ENCODE measurements at regions of chr2 and their contacts with region 1.

Region 1: GRCh38 chr2:9142551-9143263 is 63.9 kb upstream of the ASAP2 start:
- DNase-seq: peak; percentile 79 to 84 (median 83)
- ATAC-seq: peak; percentile 95 to 97 (median 96)
- H3K4me3 ChIP-seq: peak overlapping the region in 2 of 3 donors; percentile 19 to 28
- H3K27ac ChIP-seq: no peak overlapping the region
- H3K4me1 ChIP-seq: peaks cover 0 to 13% (median 0%) of the 10 kb centered on the region in 4 donors
- H3K27me3 ChIP-seq: no peaks in the 10 kb centered on the region
- CTCF ChIP-seq: peak; percentile 98 to 99 (median 98)
- POLR2A ChIP-seq: no peak

Region 2: GRCh38 chr2:9095690-9096351 is 46.9 kb before region 1 on chr2:
- intact Hi-C with region 1: no loop called
- DNase-seq: peak in 2 of 3 donors; percentile 47 to 60
- ATAC-seq: peak; percentile 66 to 76 (median 72)
- H3K4me3 ChIP-seq: no peak overlapping the region
- H3K27ac ChIP-seq: no peak overlapping the region
- H3K4me1 ChIP-seq: no peaks in the 10 kb centered on the region
- H3K27me3 ChIP-seq: no peaks in the 10 kb centered on the region
- CTCF ChIP-seq: peak in 1 of 4 donors; percentile 9
- POLR2A ChIP-seq: no peak

Region 3: DNA sequence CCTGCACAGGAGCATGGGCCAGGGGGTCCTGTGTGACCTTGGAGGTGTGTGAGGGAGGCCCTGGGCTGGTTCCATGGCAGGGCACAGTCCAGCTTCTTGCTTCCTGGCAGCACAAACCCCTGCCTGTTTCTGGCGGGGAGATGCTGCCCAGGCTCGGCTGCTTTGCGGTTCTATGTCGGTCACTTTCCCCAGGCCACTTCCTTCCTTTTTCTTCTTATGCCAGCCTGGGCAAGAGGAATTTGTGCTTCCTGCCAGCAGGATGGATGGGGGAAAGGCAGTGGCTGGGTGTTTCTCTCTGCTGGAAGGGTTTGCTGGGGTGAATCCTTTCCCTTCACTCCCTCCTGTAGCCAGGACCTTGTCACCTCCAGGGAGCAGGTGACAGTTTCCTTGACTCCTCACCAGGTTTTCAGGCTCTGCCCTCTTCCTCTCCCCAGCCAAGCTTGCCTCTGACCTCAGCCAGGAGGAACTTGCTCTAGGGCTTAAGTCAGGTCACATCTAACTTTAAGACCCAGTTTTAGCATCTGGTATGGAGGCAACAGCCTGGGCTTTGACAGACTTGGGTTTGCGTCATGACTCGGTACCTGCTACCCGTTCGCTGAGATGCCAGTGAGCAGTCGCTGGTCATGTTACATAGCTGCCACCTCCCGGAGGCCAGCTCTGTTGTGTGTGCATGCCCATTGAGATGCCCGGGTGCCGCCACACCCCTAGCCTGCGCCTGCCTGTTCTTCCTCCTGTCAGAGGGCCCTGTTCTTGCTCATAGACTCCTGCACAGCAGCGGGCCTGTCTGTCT is 88.4 kb after region 1 on chr2:
- intact Hi-C with region 1: no loop called
- DNase-seq: no peak
- ATAC-seq: peak in 2 of 4 donors; percentile 25 to 33
- H3K4me3 ChIP-seq: no peak overlapping the region
- H3K27ac ChIP-seq: no peak overlapping the region
- H3K4me1 ChIP-seq: peaks cover 0 to 7% (median 0%) of the 10 kb centered on the region in 4 donors
- H3K27me3 ChIP-seq: no peaks in the 10 kb centered on the region
- CTCF ChIP-seq: no peak
- POLR2A ChIP-seq: no peak

Region 4: DNA sequence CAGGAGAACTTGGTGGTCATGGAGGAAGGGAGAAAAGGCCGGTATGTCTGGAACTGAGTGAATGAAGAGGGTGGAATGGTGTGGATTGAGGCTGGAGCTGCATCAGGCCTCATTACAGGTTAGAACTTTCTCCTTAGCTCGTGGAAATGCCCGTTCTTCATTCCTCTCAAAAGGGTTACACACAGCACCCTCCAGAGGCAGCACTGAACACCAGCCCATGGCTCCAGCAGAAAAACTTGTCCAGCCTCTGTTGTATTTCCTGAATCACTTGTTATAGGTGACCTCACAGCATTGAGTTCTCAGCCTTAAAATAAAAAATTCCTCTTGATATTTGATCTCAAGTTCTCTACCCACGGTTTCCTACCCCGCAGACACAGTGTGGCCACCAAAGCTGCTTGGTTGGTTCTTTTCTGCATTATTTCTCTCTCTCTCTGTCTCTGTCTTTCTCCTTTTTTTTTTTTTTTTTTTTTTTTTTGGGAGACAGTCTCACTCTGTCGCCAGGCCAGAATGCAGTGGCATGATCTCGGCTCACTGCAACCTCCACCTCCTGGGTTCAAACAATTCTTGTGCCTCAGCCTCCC is 191.0 kb after region 1 on chr2:
- intact Hi-C with region 1: loop called in 1 of 2 experiments (anchors 10 kb)
- DNase-seq: peak; percentile 57 to 77 (median 67)
- ATAC-seq: peak; percentile 58 to 74 (median 68)
- H3K4me3 ChIP-seq: no peak overlapping the region
- H3K27ac ChIP-seq: peak overlapping the region in 2 of 3 donors; percentile 43 to 44
- H3K4me1 ChIP-seq: peaks cover 0 to 35% (median 11%) of the 10 kb centered on the region in 4 donors
- H3K27me3 ChIP-seq: no peaks in the 10 kb centered on the region
- CTCF ChIP-seq: peak; percentile 64 to 78 (median 71)
- POLR2A ChIP-seq: no peak

Region 5: GRCh38 chr2:9378433-9379390 is 236.0 kb after region 1 on chr2:
- intact Hi-C with region 1: loop called in 1 of 2 experiments (anchors 10 kb)
- DNase-seq: no peak
- ATAC-seq: peak; percentile 31 to 86 (median 64)
- H3K4me3 ChIP-seq: no peak overlapping the region
- H3K27ac ChIP-seq: no peak overlapping the region
- H3K4me1 ChIP-seq: peaks cover 0 to 2% (median 0%) of the 10 kb centered on the region in 4 donors
- H3K27me3 ChIP-seq: no peaks in the 10 kb centered on the region
- CTCF ChIP-seq: no peak
- POLR2A ChIP-seq: no peak